ENCODE measurements at regions of chr11 and their contacts with region 1.

Region 1: GRCh38 chr11:125592305-125593112 is at the start of gene STT3A:
- DNase-seq: peak; percentile 100
- ATAC-seq: peak; percentile 95
- H3K4me3 ChIP-seq: peak within 1 kb of the TSS; percentile 85
- H3K27ac ChIP-seq: peak within 1 kb of the TSS; percentile 94
- H3K4me1 ChIP-seq: no peaks in the 10 kb centered on the region; the same call in 1 of the 2 replicates
- H3K27me3 ChIP-seq: no peaks in the 10 kb centered on the region
- CTCF ChIP-seq: no peak
- EP300 ChIP-seq: no peak
- POLR2A ChIP-seq: peak; percentile 84
- RAD21 ChIP-seq: no peak
- polyA plus RNA-seq, gene STT3A: 82.9 to 103 TPM

Region 2: DNA sequence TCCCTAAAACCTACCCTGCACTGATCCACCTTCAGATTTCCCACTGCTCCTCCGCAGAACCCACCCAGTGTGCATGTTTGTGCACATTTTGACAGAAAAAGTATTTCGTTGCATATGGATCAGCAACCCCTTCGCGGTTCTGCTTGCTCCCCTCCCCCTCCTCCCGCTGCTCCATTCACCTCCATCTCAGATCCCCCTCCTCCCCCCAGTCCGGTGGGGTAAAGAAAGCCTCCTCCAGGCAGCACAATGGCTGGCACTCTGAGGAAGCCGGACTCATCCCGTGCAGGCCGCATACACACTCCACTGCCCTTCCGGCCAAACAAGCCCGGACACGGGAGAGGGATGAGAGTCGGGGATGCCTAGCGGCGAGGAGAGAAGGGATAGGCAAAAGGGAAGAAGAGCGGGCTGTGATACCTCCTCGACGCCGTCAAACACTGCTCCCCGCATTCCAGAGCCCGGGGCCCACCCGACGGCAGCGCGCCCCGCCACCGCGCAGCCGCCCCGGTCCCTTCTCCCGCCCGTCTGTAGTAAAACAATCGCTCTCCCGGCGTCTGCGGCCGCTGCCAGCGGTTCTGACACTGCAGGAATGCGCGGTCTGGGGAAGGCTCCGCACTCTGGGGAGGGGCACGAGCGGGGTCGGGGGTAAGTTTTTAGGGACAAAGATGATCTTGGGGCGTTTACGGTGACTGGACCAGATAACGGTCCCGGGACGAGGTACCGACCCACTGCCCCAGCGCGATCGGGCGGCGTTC is 97.4 kb before region 1 on chr11:
- CTCF ChIA-PET with region 1: no interaction called
- POLR2A ChIA-PET with region 1: interaction called, 3 read pairs
- RAD21 ChIA-PET with region 1: interaction called, 3 read pairs
- SMC1A ChIA-PET with region 1: no interaction called
- in situ Hi-C with region 1: no loop called
- intact Hi-C with region 1: loop called (anchors 5 kb)
- DNase-seq: no peak
- ATAC-seq: peak; percentile 62
- H3K4me3 ChIP-seq: peak overlapping the region; percentile 57
- H3K27ac ChIP-seq: peak overlapping the region; percentile 58
- H3K4me1 ChIP-seq: peaks cover 4% of the 10 kb centered on the region; the same call in 1 of the 2 replicates
- H3K27me3 ChIP-seq: 0 out of 4 replicates have a peak, but pooled peaks cover 0 to 7% of the 10 kb centered on the region in 2 experiments
- CTCF ChIP-seq: no peak
- EP300 ChIP-seq: no peak
- POLR2A ChIP-seq: no peak
- RAD21 ChIP-seq: no peak

Region 3: DNA sequence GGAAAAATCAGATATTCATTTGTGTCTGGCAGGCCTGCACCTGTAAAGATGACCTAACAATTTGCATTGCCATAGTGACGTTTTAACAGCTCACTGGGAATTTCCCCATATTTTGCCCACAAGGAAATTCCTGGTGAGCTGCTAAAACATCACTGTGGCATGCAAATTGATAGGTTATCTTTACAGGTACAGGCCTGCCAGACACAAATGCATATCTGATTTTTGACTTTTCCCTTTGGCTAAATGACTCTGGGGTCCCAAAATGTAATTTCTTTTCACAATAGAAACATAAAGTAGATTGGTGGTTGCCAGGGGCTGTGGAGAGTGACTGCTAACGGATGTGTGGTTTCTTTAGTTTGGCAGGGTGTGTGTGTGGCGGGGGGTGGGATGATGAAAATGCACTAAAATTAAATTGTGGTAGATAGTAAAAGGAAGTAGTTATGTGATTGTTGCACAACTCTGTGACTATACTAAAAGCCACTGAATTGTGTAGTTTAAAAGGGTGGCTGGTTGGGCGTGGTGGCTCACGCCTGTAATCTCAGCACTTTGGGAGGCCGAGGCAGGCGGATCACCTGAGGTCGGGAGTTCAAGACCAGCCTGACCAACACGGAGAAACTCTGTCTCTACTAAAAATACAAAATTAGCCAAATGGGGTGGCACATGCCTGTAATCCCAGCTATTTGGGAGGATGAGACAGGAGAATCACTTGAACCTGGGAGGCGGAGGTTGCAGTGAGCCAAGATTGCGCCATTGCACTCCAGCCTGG is 78.0 kb before region 1 on chr11:
- CTCF ChIA-PET with region 1: interaction called, 3 read pairs
- POLR2A ChIA-PET with region 1: interaction called, 6 read pairs
- RAD21 ChIA-PET with region 1: interaction called, 7 read pairs
- SMC1A ChIA-PET with region 1: interaction called, 3 read pairs
- in situ Hi-C with region 1: no loop called
- intact Hi-C with region 1: loop called (anchors 2 kb)
- DNase-seq: peak; percentile 92
- ATAC-seq: peak; percentile 88
- H3K4me3 ChIP-seq: no peak overlapping the region
- H3K27ac ChIP-seq: peak overlapping the region; percentile 80
- H3K4me1 ChIP-seq: peaks cover 46% of the 10 kb centered on the region
- H3K27me3 ChIP-seq: no peaks in the 10 kb centered on the region
- CTCF ChIP-seq: no peak
- EP300 ChIP-seq: peak in 1 of 2 experiments; percentile 86; a peak in 2 of 4 replicates
- POLR2A ChIP-seq: no peak
- RAD21 ChIP-seq: no peak

Region 4: GRCh38 chr11:125568970-125569914 is 23.3 kb before region 1 on chr11 and contains the start of gene EI24:
- CTCF ChIA-PET with region 1: interaction called, 33 read pairs
- POLR2A ChIA-PET with region 1: interaction called, 90 read pairs
- RAD21 ChIA-PET with region 1: interaction called, 19 read pairs
- SMC1A ChIA-PET with region 1: interaction called, 16 read pairs
- in situ Hi-C with region 1: no loop called
- intact Hi-C with region 1: no loop called
- DNase-seq: peak; percentile 72
- ATAC-seq: peak; percentile 97
- H3K4me3 ChIP-seq: peak within 1 kb of the TSS; percentile 79
- H3K27ac ChIP-seq: peak within 1 kb of the TSS; percentile 83
- H3K4me1 ChIP-seq: peaks cover 8% of the 10 kb centered on the region
- H3K27me3 ChIP-seq: no peaks in the 10 kb centered on the region
- CTCF ChIP-seq: peak; percentile 55 to 73 (median 65)
- EP300 ChIP-seq: no peak
- POLR2A ChIP-seq: peak; percentile 82
- RAD21 ChIP-seq: peak; percentile 42
- polyA plus RNA-seq, gene EI24: 20.3 to 32.8 TPM

Region 5: DNA sequence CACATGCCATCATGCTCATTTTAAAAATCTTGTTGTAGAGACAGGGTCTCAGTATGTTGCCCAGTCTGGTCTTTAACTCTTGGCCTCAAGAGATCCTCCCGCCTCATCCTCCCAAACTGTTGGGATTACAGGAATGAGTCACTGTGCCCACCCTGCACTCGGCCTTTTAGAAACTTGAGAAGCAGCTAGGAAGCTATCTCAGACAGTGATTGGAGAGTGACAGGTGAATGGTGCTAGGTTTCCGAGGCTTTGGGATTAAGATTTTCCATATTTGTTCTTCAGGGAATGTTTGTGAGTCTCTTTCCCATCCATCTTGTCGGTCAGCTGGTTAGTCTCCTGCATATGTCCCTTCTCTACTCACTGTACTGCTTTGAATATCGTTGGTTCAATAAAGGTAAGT is 12.7 kb before region 1 on chr11:
- CTCF ChIA-PET with region 1: no interaction called
- POLR2A ChIA-PET with region 1: interaction called, 11 read pairs
- RAD21 ChIA-PET with region 1: interaction called, 4 read pairs
- SMC1A ChIA-PET with region 1: interaction called, 5 read pairs
- in situ Hi-C with region 1: no loop called
- intact Hi-C with region 1: no loop called
- DNase-seq: no peak
- ATAC-seq: no peak
- H3K4me3 ChIP-seq: no peak overlapping the region
- H3K27ac ChIP-seq: no peak overlapping the region
- H3K4me1 ChIP-seq: no peaks in the 10 kb centered on the region
- H3K27me3 ChIP-seq: no peaks in the 10 kb centered on the region
- CTCF ChIP-seq: no peak
- EP300 ChIP-seq: no peak
- POLR2A ChIP-seq: no peak
- RAD21 ChIP-seq: no peak

Region 6: GRCh38 chr11:125625630-125626287 is 33.2 kb after region 1 on chr11:
- CTCF ChIA-PET with region 1: interaction called, 4 read pairs
- POLR2A ChIA-PET with region 1: interaction called, 18 read pairs
- RAD21 ChIA-PET with region 1: interaction called, 5 read pairs
- SMC1A ChIA-PET with region 1: interaction called, 6 read pairs
- in situ Hi-C with region 1: no loop called
- intact Hi-C with region 1: loop called (anchors 2 kb)
- DNase-seq: peak; percentile 77
- ATAC-seq: peak; percentile 92
- H3K4me3 ChIP-seq: peak overlapping the region; percentile 81
- H3K27ac ChIP-seq: peak overlapping the region; percentile 97
- H3K4me1 ChIP-seq: peaks cover 7% of the 10 kb centered on the region; the same call in 1 of the 2 replicates
- H3K27me3 ChIP-seq: no peaks in the 10 kb centered on the region
- CTCF ChIP-seq: no peak
- EP300 ChIP-seq: no peak
- POLR2A ChIP-seq: peak; percentile 99
- RAD21 ChIP-seq: no peak

Region 7: GRCh38 chr11:125784678-125785077 is 192.2 kb after region 1 on chr11:
- CTCF ChIA-PET with region 1: no interaction called
- POLR2A ChIA-PET with region 1: no interaction called
- RAD21 ChIA-PET with region 1: no interaction called
- SMC1A ChIA-PET with region 1: no interaction called
- in situ Hi-C with region 1: no loop called
- intact Hi-C with region 1: no loop called
- DNase-seq: no peak
- ATAC-seq: no peak
- H3K4me3 ChIP-seq: no peak overlapping the region
- H3K27ac ChIP-seq: no peak overlapping the region
- H3K4me1 ChIP-seq: no peaks in the 10 kb centered on the region
- H3K27me3 ChIP-seq: no peaks in the 10 kb centered on the region
- CTCF ChIP-seq: no peak
- EP300 ChIP-seq: no peak
- POLR2A ChIP-seq: no peak
- RAD21 ChIP-seq: no peak

Region 8: GRCh38 chr11:125887373-125888324 is 295.1 kb after region 1 on chr11 and contains the start of gene HYLS1:
- CTCF ChIA-PET with region 1: no interaction called
- POLR2A ChIA-PET with region 1: interaction called, 3 read pairs
- RAD21 ChIA-PET with region 1: no interaction called
- SMC1A ChIA-PET with region 1: no interaction called
- in situ Hi-C with region 1: no loop called
- intact Hi-C with region 1: loop called (anchors 5 kb)
- DNase-seq: peak; percentile 86
- ATAC-seq: peak; percentile 92
- H3K4me3 ChIP-seq: peak within 1 kb of the TSS; percentile 81
- H3K27ac ChIP-seq: peak within 1 kb of the TSS; percentile 90
- H3K4me1 ChIP-seq: no peaks in the 10 kb centered on the region
- H3K27me3 ChIP-seq: no peaks in the 10 kb centered on the region
- CTCF ChIP-seq: peak; percentile 24 to 39 (median 28); a peak in 4 of 6 replicates
- EP300 ChIP-seq: peak in 1 of 2 experiments; percentile 77; a peak in 2 of 4 replicates
- POLR2A ChIP-seq: peak; percentile 84
- RAD21 ChIP-seq: no peak
- polyA plus RNA-seq, gene HYLS1: 16.7 to 35.1 TPM